Activated CD8-positive, alpha-beta T cell treated with anti-CD3 and anti-CD28 coated beads for 36 hours (primary cell): ENCODE measurements at regions of chr14 and their contacts with region 1.

Region 1: GRCh38 chr14:88005978-88006851 is 1.3 kb downstream of the GPR65 start:
- DNase-seq: peak; percentile 85
- ATAC-seq: peak; percentile 82
- H3K4me3 Mint-ChIP-seq: peak overlapping the region; percentile 93
- H3K27ac Mint-ChIP-seq: peak overlapping the region; percentile 96
- H3K4me1 Mint-ChIP-seq: peaks cover 62% of the 10 kb centered on the region
- H3K27me3 Mint-ChIP-seq: no peaks in the 10 kb centered on the region
- CTCF ChIP-seq: no peak

Region 2: DNA sequence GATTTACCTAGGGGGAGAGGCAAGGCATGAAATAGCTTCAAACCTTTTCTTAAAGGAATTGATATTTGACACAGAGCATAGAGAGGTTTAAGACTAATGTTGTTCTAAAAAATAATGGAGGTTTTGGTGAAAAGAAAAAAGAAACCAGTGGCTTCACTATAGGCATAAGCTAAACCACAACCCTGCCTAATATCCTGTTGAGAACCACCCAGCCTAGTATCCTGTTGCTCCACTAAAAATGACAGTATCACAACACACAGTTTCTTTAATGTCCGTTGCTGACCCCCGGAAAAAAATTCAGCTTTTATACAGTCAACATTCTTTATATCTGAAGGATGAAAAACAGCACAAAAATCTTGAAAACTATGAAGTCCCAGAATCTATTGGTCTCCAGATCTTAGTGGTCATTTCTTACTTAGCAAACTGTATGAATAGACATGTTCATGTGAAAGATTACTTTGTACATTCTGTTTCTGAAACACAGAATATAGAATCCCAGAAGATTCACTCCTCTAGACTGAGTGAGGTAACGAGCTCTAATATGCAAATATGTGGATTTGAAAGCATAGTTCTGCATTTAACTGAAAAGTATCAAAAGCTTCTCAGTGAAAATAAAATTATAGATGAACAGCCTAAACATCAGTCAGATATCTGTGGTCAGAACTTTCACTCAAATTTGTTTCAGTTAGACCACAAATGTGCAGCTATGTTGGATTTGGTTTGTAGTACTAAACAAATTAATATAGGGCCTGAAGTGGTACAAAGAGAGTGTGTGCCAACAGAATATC is 53.7 kb before region 1 on chr14:
- CTCF ChIA-PET with region 1: interaction called, 3 read pairs
- POLR2A ChIA-PET with region 1: no interaction called
- intact Hi-C with region 1: loop called (anchors 5 kb)
- DNase-seq: no peak
- ATAC-seq: peak; percentile 72
- H3K4me3 Mint-ChIP-seq: peak overlapping the region; percentile 34
- H3K27ac Mint-ChIP-seq: peak overlapping the region; percentile 81
- H3K4me1 Mint-ChIP-seq: peaks cover 29% of the 10 kb centered on the region
- H3K27me3 Mint-ChIP-seq: no peaks in the 10 kb centered on the region
- CTCF ChIP-seq: no peak

Region 3: GRCh38 chr14:87992718-87993628 is 13.2 kb before region 1 on chr14 and contains the start of gene GALC:
- CTCF ChIA-PET with region 1: interaction called, 11 read pairs
- POLR2A ChIA-PET with region 1: interaction called, 146 read pairs
- intact Hi-C with region 1: loop called (anchors 1 kb)
- DNase-seq: peak; percentile 98
- ATAC-seq: peak; percentile 86
- H3K4me3 Mint-ChIP-seq: peak within 1 kb of the TSS; percentile 86
- H3K27ac Mint-ChIP-seq: peak within 1 kb of the TSS; percentile 96
- H3K4me1 Mint-ChIP-seq: peaks cover 55% of the 10 kb centered on the region
- H3K27me3 Mint-ChIP-seq: no peaks in the 10 kb centered on the region
- CTCF ChIP-seq: no peak
- total RNA-seq, gene GALC: 8.6 to 11.3 TPM

Region 4: GRCh38 chr14:88089445-88089844 is 83.2 kb after region 1 on chr14:
- CTCF ChIA-PET with region 1: no interaction called
- POLR2A ChIA-PET with region 1: no interaction called
- intact Hi-C with region 1: no loop called
- DNase-seq: no peak
- ATAC-seq: no peak
- H3K4me3 Mint-ChIP-seq: no peak overlapping the region
- H3K27ac Mint-ChIP-seq: no peak overlapping the region
- H3K4me1 Mint-ChIP-seq: no peaks in the 10 kb centered on the region
- H3K27me3 Mint-ChIP-seq: no peaks in the 10 kb centered on the region
- CTCF ChIP-seq: no peak

Region 5: GRCh38 chr14:88106377-88106776 is 100.2 kb after region 1 on chr14:
- CTCF ChIA-PET with region 1: no interaction called
- POLR2A ChIA-PET with region 1: no interaction called
- intact Hi-C with region 1: no loop called
- DNase-seq: no peak
- ATAC-seq: no peak
- H3K4me3 Mint-ChIP-seq: no peak overlapping the region
- H3K27ac Mint-ChIP-seq: no peak overlapping the region
- H3K4me1 Mint-ChIP-seq: no peaks in the 10 kb centered on the region
- H3K27me3 Mint-ChIP-seq: no peaks in the 10 kb centered on the region
- CTCF ChIP-seq: no peak